ENCODE measurements at regions of chr1 and their contacts with region 1.

Region 1: DNA sequence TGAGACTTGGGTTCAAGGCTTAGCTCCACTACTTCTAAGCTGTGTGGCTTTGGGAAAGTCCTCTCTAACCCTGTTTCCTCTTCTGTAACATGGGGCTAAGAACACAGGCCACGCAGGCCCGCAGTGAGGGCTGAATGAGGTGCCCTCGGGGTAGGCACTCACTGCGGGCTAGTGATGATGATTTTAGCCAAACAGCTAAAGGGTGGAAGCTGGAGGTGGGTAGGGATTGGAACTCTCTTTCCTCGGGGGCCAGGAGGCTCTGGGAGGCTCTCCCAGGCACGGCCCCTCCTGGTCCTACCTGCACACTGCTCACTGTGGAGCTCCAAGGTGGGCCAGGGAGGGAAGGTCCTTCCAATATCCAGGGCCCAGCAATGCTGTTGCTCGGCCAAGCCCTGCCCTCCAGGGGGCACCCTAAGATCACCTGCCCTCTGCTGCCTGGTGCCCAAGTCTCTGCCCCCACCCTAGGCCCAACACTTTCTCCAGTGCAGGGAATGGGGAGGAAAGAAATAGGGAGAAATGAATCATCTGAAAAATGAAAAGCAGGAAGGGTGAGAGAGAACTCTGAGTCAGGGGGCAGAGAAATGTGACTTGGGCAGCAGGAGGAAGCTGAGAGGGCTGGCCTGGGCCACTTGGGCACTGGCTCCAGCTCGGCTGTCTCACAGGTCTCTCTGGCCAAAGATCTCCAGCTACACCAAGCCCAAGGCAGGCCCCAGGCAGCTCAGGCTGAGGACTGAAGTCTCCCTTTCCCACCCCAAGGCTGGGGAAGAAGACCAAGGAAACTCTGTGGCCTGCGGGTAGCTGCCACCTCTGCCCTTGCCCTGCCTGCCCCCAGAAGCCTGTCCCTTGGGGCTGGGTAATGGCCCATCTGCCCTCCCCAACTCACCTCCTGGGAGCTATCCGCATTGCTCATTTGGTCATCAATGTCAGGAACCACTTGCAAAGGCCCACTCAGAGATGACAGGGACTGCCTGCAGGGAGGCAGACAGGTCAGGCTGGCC is 19.3 kb upstream of the EVA1B start:
- DNase-seq: peak in 1 of 2 donors; percentile 74
- ATAC-seq: peak; percentile 85

Region 2: GRCh38 chr1:36420836-36421664 is 78.3 kb after region 1 on chr1:
- intact Hi-C with region 1: loop called in 1 of 2 experiments (anchors 5 kb)
- DNase-seq: peak; percentile 75 to 92
- ATAC-seq: peak; percentile 91